Activated CD8-positive, alpha-beta memory T cell treated with anti-CD3 and anti-CD28 coated beads, Interleukin-2, amount 10 ng/mL, durations not matched to agents 7 days and 5 days (primary cell): ENCODE measurements at regions of chr2 and their contacts with region 1.

Region 1: DNA sequence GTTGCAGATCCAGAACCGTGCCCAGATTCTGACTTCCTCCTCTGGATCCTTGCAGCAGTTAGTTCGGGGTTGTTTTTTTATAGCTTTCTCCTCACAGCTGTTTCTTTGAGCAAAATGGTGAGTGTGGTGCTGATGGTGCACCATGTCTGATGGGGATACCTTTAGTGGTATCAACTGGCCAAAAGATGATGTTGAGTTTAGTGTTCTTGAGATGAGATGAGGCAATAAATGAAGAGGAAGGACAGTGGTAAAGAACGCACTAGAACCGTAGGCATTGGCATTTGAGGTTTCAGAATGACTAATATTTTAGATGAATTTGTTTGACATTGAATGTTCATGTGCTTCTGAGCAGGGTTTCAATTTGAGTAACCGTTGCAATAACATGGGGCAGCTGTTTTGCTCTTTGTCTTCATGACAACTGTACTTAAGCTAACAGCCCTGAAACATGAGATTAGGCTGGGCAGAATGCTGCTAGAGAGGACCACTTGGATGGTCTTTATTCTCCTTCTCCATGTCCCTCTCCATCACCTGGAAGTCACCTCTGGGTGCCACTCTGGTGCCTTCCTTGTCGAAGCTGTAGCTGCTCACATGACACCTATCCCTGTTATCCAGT is 3.9 kb downstream of the CTLA4 start:
- DNase-seq: peak; percentile 81
- ATAC-seq: peak; percentile 65
- H3K4me3 Mint-ChIP-seq: peak overlapping the region; percentile 81
- H3K27ac Mint-ChIP-seq: peak overlapping the region; percentile 99
- H3K4me1 Mint-ChIP-seq: peaks cover 88% of the 10 kb centered on the region
- H3K27me3 Mint-ChIP-seq: no peaks in the 10 kb centered on the region

Region 2: DNA sequence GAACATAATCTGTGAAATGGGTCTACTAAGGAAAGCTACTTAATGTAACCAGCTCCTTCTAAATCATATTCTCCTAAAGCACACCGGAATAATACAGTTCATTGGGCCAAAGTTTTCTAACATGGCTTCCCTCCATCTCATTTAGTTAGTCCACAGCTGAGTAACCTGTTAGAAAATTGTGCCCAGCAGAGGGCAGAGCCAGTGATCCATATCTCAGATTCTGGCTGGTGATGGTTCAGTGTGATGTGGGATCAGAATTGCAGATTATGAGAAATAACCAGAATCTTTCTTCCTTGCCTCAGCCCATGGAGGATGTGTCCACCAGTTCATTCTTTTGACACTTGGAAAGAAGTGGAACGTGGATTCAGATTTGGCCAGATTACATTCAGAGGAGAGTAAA is 13.3 kb before region 1 on chr2:
- CTCF ChIA-PET with region 1: interaction called, 14 read pairs
- DNase-seq: peak; percentile 57
- ATAC-seq: peak; percentile 72
- H3K4me3 Mint-ChIP-seq: no peak overlapping the region
- H3K27ac Mint-ChIP-seq: no peak overlapping the region
- H3K4me1 Mint-ChIP-seq: peaks cover 54% of the 10 kb centered on the region
- H3K27me3 Mint-ChIP-seq: no peaks in the 10 kb centered on the region

Region 3: GRCh38 chr2:203887677-203888076 is 16.2 kb after region 1 on chr2:
- CTCF ChIA-PET with region 1: interaction called, 24 read pairs
- DNase-seq: no peak
- ATAC-seq: no peak
- H3K4me3 Mint-ChIP-seq: no peak overlapping the region
- H3K27ac Mint-ChIP-seq: peak overlapping the region; percentile 42
- H3K4me1 Mint-ChIP-seq: peaks cover 65% of the 10 kb centered on the region
- H3K27me3 Mint-ChIP-seq: no peaks in the 10 kb centered on the region

Region 4: DNA sequence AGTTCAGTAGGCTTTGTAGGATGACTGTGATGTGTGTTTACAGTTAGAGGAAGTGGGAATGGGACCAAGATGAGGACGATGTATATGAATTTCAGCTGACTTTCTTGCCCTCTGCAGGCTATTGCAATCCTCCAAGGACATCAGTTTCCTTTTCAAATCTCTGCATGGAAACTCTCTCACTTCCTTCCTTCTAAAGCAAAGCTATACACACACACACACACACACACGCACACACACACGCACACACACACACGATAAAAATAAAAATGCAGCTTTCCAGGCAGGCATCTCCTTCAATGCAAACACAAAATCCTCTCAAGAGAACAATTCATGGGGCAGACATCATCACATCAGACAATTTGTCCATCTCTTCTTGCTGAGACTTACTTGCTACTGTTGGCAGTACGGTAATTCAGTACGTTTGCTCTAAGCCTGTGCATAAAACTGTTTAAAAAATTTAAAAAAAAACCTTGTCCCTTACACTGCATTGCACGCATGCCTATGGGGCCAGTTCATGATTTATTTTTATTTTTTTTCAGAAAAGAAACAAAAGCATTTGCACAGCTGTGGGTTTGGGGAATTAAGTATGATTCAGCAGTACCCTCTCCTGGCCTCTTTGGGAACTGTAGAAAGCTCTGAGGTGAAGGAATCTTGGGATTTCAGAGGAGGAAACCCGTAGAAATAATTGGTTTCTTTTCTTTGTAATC is 37.9 kb after region 1 on chr2:
- CTCF ChIA-PET with region 1: interaction called, 12 read pairs
- DNase-seq: no peak
- ATAC-seq: peak; percentile 74
- H3K4me3 Mint-ChIP-seq: peak overlapping the region; percentile 0
- H3K27ac Mint-ChIP-seq: peak overlapping the region; percentile 12
- H3K4me1 Mint-ChIP-seq: peaks cover 25% of the 10 kb centered on the region
- H3K27me3 Mint-ChIP-seq: no peaks in the 10 kb centered on the region